ENCODE measurements at regions of chrX and their contacts with region 1.

Region 1: DNA sequence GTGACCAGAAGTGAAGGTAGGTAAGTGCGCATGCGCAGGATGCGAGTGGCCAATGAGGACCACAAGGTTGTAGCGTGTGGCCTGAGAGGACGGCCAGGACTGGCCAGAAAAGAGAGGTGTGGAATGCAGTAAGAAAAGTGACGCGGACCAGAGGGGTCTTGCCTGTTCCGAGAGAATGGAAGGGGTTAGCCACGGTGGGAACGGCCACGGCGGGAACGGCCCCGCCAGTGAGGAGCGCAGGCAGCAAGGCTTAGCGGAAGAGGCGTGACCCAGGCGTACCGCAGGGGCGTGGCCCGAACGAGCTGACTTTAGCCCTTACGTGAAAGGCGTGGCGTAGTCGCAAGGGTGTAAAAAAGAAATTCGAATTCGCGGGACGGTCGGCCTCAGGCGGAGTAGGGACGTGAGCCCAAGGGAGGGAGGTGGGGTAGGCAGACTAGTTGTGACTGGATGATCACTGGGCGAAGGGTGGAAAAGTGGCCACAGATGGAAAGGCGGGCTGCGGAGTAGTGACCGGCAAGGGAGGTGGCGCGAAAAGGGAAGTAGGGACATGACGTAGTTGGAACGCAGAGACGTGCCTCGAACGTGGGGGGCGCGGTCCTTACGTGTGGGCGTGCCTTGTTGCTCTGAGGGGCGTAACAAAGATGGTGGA is 10.4 kb upstream of the CLTRN start:
- DNase-seq: peak; percentile 95
- H3K4me3 ChIP-seq: peak overlapping the region; percentile 64 to 75
- H3K27ac ChIP-seq: peak overlapping the region; percentile 97 to 99
- H3K4me1 ChIP-seq: peaks cover 0 to 22% (median 8%) of the 10 kb centered on the region in 4 donors
- H3K27me3 ChIP-seq: no peaks in the 10 kb centered on the region
- CTCF ChIP-seq: no peak

Region 2: DNA sequence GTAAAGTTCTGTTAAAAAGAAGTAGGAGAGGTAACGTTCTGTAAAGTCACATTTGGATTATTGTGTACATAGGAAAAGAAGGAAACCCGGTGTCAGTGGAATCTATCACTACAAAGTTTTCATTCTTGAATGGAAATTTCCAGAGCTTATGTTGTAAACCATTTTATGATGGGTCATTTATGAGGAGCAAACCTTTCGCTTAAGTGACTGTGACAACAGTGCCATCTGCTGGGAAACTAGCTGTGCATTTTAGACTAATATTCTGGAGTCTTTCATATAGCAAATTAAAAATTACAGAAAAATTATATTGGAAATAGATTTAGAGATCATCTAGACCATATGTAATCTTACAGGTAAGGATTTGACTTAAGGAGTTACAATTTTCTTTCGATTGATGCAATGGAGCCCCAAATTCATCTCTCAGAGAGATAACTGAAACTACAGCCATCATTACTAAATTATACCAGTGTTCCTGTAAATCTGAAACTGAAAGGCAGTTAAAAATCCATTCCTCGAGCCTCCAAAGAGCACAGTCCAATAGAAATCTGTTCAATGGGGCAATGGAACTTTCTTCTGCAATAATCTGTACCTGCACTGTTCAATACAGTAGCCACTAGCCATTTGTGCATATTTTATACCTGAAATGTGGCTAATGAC is 431.9 kb before region 1 on chrX:
- intact Hi-C with region 1: no loop called
- DNase-seq: no peak
- H3K4me3 ChIP-seq: no peak overlapping the region
- H3K27ac ChIP-seq: no peak overlapping the region
- H3K4me1 ChIP-seq: no peaks in the 10 kb centered on the region
- H3K27me3 ChIP-seq: no peaks in the 10 kb centered on the region
- CTCF ChIP-seq: peak; percentile 10 to 31

Region 3: DNA sequence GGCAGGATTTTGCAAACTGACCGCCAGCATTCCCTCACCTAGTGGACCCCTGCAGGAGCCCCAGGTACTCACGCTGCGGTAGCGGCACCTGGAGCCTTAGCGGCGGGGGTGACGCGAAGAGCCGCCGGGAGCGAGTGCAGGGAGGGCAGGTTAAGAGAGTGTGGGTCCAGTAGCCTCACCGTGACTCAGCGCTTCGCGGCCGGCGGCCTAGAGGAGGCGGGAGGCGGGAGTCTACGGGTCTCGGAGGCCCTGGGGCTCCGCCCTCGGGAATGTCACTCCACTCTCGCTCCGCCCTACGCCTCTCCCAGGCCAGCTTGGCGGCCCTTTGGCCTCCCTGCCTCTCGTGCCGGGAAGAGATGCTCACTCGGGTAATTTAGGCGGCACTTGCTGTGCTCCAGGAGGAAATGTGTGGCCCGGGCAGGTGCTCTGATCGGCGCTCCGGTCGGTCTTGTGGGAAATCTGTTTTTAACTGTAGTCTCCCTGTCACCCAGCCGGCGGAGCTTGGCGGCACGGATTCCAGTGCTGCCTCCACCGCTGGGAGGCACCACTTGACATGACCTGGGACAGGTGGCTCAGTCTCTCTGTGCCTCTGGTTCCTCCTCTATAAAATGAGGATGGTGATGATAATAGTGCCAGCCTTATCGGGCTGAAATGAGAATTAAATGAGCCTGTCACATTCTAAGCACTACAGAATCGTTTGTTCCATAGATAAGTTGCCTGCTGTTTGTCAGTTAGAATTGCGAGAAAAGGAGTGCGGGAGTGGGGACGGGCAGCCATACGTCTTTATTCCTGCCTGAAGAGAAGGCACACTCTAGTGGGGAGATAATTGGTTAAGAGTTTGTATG is 181.6 kb before region 1 on chrX and contains the start of gene PIR:
- intact Hi-C with region 1: loop called (anchors 5 kb)
- DNase-seq: peak; percentile 84 to 92
- H3K4me3 ChIP-seq: peak within 1 kb of the TSS; percentile 59 to 64
- H3K27ac ChIP-seq: peak within 1 kb of the TSS; percentile 55 to 77
- H3K4me1 ChIP-seq: peaks cover 0 to 16% (median 0%) of the 10 kb centered on the region in 4 donors
- H3K27me3 ChIP-seq: no peaks in the 10 kb centered on the region
- CTCF ChIP-seq: peak in 1 of 2 experiments; percentile 18

Region 4: GRCh38 chrX:15854712-15855567 is 180.0 kb after region 1 on chrX and contains the start of gene AP1S2:
- intact Hi-C with region 1: loop called (anchors 10 kb)
- DNase-seq: peak; percentile 85 to 94
- H3K4me3 ChIP-seq: peak within 1 kb of the TSS; percentile 84 to 87
- H3K27ac ChIP-seq: peak within 1 kb of the TSS; percentile 83 to 86
- H3K4me1 ChIP-seq: peaks cover 0 to 16% (median 0%) of the 10 kb centered on the region in 4 donors
- H3K27me3 ChIP-seq: no peaks in the 10 kb centered on the region
- CTCF ChIP-seq: no peak

Region 5: GRCh38 chrX:16836371-16836770 is 1161.4 kb after region 1 on chrX:
- intact Hi-C with region 1: no loop called
- DNase-seq: no peak
- H3K4me3 ChIP-seq: no peak overlapping the region
- H3K27ac ChIP-seq: no peak overlapping the region
- H3K4me1 ChIP-seq: peaks cover 0 to 23% (median 13%) of the 10 kb centered on the region in 4 donors
- H3K27me3 ChIP-seq: no peaks in the 10 kb centered on the region
- CTCF ChIP-seq: peak; percentile 27

Measured in tibial artery (tissue), 4 donors.